ENCODE measurements at regions of chr15 and their contacts with region 1.

Region 1: DNA sequence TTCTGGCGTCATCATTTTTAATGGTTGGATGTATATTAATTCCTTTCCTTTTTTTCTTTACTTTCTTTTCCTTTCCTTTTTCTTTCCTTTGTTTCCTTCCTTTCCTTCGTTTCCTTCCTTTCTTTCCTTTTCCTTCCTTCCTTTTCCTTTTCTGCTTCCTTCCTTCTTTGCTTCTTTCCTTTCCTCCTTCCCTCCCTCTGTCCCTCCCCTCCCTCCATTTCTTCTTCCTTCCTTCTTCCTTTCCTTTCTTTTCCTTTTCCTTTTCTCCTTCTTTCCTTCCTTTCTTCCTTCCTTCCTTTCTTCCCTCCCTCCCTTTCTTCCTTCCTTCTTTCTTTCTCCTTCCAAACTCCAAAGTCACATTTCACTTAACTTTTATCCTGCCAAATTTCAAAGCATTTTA is 54.9 kb upstream of the LYSMD4 start:
- DNase-seq: no peak
- ATAC-seq: no peak
- H3K4me3 ChIP-seq: no peak overlapping the region
- H3K27ac ChIP-seq: no peak overlapping the region
- H3K4me1 ChIP-seq: no peaks in the 10 kb centered on the region
- H3K27me3 ChIP-seq: no peaks in the 10 kb centered on the region
- CTCF ChIP-seq: no peak
- POLR2A ChIP-seq: no peak

Region 2: GRCh38 chr15:99421172-99421656 is 367.0 kb before region 1 on chr15:
- intact Hi-C with region 1: no loop called
- DNase-seq: no peak
- ATAC-seq: no peak
- H3K4me3 ChIP-seq: no peak overlapping the region
- H3K27ac ChIP-seq: peak overlapping the region in 3 of 12 donors; percentile 0 to 55 (median 46)
- H3K4me1 ChIP-seq: peaks cover 8 to 32% (median 22%) of the 10 kb centered on the region in 12 donors
- H3K27me3 ChIP-seq: no peaks in the 10 kb centered on the region
- CTCF ChIP-seq: no peak
- POLR2A ChIP-seq: no peak

Region 3: DNA sequence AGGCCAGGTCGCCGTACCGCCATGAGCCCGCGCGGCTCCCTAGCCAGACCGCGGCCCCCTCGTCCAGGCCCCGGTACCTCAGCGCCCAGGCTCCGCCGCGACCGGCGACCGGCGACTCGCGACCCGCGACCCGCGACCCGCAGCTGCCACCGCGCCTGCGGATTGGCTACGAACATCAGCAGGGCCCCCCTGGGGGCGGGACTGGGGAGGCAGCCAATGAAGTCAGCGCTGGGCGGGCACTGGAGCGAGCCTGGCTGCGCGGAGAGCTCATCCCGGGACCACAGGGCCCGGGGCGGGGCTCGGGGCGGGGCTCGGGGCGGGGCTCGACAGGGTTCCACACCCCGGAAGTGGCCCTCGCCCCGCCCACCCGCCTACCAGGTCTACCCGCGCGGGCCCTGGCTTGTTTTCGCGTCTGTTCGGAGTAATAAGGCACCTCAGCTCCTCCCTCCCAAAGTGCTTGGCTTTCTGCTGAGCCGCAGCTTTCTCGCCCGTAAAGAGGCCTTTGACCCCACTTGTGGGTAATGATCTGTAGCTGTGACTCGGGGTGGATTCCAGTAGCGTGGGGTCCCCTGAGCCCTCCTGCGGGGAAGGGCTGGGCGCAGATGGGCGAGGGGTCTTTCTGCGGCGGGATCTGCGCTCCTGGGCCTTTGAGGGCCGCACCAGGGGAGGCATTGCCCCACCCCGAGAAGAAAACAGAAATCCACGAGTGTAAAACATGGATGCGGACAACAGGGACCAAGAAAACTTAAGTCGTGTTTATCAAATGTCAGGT is 54.7 kb before region 1 on chr15 and contains the start of gene LYSMD4:
- intact Hi-C with region 1: loop called in 1 of 10 experiments (anchors 10 kb)
- DNase-seq: peak; percentile 98 to 99 (median 99)
- ATAC-seq: peak; percentile 98 to 99 (median 99)
- H3K4me3 ChIP-seq: peak within 1 kb of the TSS; percentile 55 to 99 (median 96)
- H3K27ac ChIP-seq: peak within 1 kb of the TSS; percentile 49 to 94 (median 84)
- H3K4me1 ChIP-seq: peaks cover 0 to 42% (median 19%) of the 10 kb centered on the region in 12 donors
- H3K27me3 ChIP-seq: no peaks in the 10 kb centered on the region
- CTCF ChIP-seq: no peak
- POLR2A ChIP-seq: peak in 1 of 2 donors; percentile 91
- total RNA-seq, gene LYSMD4: 8.3 to 12.8 (median 10.3) TPM

Region 4: DNA sequence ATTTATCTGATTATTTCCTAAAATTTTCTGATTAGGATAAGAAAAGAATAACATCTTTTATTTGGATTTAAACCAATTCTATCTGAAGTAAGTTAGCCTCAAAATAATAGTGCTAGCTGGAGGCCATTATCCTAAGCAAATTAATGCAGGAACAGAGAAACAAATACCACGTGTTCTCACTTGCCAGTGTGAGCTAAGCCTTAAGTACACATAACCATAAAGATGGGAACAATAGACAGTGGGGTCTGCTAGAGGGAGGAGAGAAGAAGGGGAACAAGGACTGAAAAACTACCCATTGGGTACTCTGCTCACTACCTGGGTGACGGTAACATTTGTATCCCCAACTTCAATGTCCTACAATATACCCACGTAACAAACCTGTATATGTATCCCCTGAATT is 23.7 kb before region 1 on chr15:
- intact Hi-C with region 1: no loop called
- DNase-seq: no peak
- ATAC-seq: no peak
- H3K4me3 ChIP-seq: no peak overlapping the region
- H3K27ac ChIP-seq: no peak overlapping the region
- H3K4me1 ChIP-seq: no peaks in the 10 kb centered on the region
- H3K27me3 ChIP-seq: no peaks in the 10 kb centered on the region
- CTCF ChIP-seq: no peak
- POLR2A ChIP-seq: no peak